ENCODE measurements at regions of chr6 and their contacts with region 1.

Region 1: GRCh38 chr6:83057705-83058321 is 7.8 kb downstream of the UBE3D start:
- DNase-seq: no peak
- H3K4me3 ChIP-seq: no peak overlapping the region
- H3K27ac ChIP-seq: no peak overlapping the region
- H3K4me1 ChIP-seq: no peaks in the 10 kb centered on the region
- H3K27me3 ChIP-seq: no peaks in the 10 kb centered on the region
- CTCF ChIP-seq: peak in 2 of 3 experiments; percentile 47 to 58

Region 2: GRCh38 chr6:82270881-82271645 is 786.8 kb before region 1 on chr6:
- intact Hi-C with region 1: loop called (anchors 1 kb)
- DNase-seq: no peak
- H3K4me3 ChIP-seq: no peak overlapping the region
- H3K27ac ChIP-seq: no peak overlapping the region
- H3K4me1 ChIP-seq: no peaks in the 10 kb centered on the region
- H3K27me3 ChIP-seq: no peaks in the 10 kb centered on the region
- CTCF ChIP-seq: peak; percentile 20 to 67 (median 55)

Region 3: DNA sequence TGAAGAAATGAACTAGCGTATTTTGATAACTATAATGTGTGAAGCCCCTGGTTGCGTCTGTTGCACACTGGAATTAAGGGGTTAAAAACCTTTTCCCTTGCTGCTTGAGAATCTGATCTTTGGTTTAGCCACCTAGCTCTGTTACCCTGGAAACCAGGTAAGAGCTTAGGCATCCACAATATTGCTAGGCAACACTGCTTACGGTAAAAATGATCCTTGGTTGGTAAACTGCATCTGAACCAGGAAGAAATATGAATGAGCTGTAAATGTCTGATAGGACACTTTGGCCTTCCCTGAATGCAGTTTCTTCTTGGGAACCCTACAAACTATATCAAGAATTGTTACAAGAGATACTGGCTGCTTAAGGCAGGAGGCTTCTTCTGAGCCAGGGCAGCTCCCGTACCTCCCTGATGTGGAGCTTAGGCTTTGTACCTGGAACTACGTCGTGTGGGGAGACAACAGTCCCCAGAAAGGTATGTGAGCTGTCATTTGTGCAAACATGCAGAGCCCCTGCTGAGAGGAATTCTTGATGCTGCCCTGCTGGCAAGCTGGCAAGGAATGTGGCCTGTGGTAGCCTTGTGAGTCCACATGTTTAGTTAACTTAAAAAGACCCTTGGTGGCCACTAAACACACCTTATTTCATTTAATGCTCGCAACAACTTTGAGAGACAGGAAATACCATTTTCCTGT is 10.6 kb before region 1 on chr6:
- intact Hi-C with region 1: no loop called
- DNase-seq: no peak
- H3K4me3 ChIP-seq: no peak overlapping the region
- H3K27ac ChIP-seq: no peak overlapping the region
- H3K4me1 ChIP-seq: no peaks in the 10 kb centered on the region
- H3K27me3 ChIP-seq: no peaks in the 10 kb centered on the region
- CTCF ChIP-seq: no peak

Measured in ascending aorta (tissue), 2 donors.